ENCODE measurements at regions of chr9 and their contacts with region 1.

Region 1: GRCh38 chr9:13915591-13916326 is 398.2 kb downstream of the NFIB start:
- DNase-seq: no peak
- H3K4me3 ChIP-seq: no peak overlapping the region
- H3K27ac ChIP-seq: no peak overlapping the region
- H3K4me1 ChIP-seq: no peaks in the 10 kb centered on the region
- H3K27me3 ChIP-seq: no peaks in the 10 kb centered on the region
- CTCF ChIP-seq: no peak
- POLR2A ChIP-seq: no peak

Region 2: GRCh38 chr9:14107977-14108376 is 192.2 kb after region 1 on chr9:
- intact Hi-C with region 1: loop called (anchors 5 kb)
- DNase-seq: no peak
- H3K4me3 ChIP-seq: no peak overlapping the region
- H3K27ac ChIP-seq: no peak overlapping the region
- H3K4me1 ChIP-seq: no peaks in the 10 kb centered on the region
- H3K27me3 ChIP-seq: no peaks in the 10 kb centered on the region
- CTCF ChIP-seq: no peak
- POLR2A ChIP-seq: no peak

Region 3: DNA sequence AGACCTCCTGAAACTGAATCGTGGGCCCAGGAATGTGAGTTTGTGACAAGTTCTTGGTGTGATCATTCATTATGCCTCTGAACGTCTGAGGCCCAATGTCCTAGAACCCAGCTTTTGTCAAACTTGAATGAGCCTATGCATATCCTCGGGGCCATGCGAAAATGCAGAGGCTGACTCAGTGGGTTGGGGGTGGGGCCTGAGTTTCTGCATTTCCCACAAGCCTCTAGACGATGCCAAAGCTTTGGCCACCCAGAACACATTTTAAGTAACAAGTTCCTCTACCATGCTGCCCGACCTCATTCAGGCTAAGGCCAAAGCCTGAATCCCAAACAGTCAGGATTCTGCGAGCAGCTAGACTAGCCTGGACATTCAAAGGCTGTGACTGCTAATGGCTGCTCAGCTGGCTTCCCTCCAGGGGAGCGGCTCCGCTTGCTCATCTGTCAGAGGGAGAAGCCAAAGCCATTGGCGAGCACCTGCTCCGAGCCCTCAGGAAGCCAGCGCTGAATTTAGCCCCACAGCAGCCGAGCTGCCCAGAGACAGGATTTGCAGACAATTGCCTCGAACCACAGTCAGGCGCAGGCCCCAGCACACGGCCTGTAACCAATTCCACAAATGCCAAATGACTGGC is 599.9 kb after region 1 on chr9:
- intact Hi-C with region 1: no loop called
- DNase-seq: no peak
- H3K4me3 ChIP-seq: no peak overlapping the region
- H3K27ac ChIP-seq: no peak overlapping the region
- H3K4me1 ChIP-seq: no peaks in the 10 kb centered on the region
- H3K27me3 ChIP-seq: no peaks in the 10 kb centered on the region
- CTCF ChIP-seq: no peak
- POLR2A ChIP-seq: no peak

Measured in vagina (tissue), 2 donors.